Activated CD4-positive, alpha-beta T cell treated with anti-CD3 and anti-CD28 coated beads, Interleukin-2, amount 10 ng/mL, durations not matched to agents 7 days and 5 days (primary cell): ENCODE measurements at regions of chr6 and their contacts with region 1.

Region 1: DNA sequence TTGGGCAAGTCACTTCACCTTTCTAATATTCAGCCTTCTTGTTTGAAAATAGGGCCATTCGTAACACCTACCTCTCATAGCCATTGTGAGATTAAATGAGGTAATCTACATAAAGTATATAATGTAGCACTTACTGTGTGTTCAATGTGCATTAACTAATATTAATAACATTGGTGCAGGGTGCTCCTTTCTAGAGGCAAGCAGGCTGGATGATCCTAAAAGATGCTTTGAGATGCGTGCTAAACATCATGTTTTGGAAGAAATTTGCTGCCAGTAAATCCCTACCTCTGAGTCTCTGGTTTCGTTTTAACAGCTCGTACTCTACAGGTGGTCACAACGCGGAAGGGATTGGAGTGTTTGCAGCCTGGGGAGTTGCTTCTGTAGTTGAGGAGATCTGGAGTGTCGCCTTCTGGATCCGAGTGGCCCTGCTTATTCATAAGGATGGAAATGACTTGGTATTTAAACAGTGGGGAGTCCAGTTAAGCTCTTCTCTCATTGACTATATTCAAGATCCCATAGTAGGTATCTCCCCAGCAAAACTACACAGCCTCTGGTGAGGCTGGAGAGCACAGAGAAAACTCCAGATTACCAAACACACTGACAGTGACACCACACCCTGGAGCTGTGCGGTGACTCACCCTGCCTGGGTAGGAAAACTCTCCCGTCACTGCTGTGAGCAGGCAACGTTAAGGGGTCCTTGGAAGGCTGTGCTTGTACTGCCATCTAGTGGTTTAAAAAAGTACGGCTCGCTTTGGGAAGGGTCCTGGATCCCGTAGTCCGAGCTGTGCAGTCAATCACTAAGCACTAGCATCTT is 107.9 kb downstream of the MAP3K7 start:
- DNase-seq: peak; percentile 87
- H3K4me3 Mint-ChIP-seq: no peak overlapping the region
- H3K27ac Mint-ChIP-seq: peak overlapping the region; percentile 1
- H3K4me1 Mint-ChIP-seq: peaks cover 58% of the 10 kb centered on the region
- H3K27me3 Mint-ChIP-seq: no peaks in the 10 kb centered on the region

Region 2: GRCh38 chr6:89940225-89941027 is 538.6 kb before region 1 on chr6:
- CTCF ChIA-PET with region 1: interaction called, 45 read pairs
- POLR2A ChIA-PET with region 1: no interaction called
- DNase-seq: peak; percentile 83
- H3K4me3 Mint-ChIP-seq: no peak overlapping the region
- H3K27ac Mint-ChIP-seq: peak overlapping the region; percentile 72
- H3K4me1 Mint-ChIP-seq: peaks cover 45% of the 10 kb centered on the region
- H3K27me3 Mint-ChIP-seq: no peaks in the 10 kb centered on the region

Region 3: GRCh38 chr6:90285611-90286381 is 193.2 kb before region 1 on chr6:
- CTCF ChIA-PET with region 1: interaction called, 68 read pairs
- POLR2A ChIA-PET with region 1: no interaction called
- DNase-seq: peak; percentile 64
- H3K4me3 Mint-ChIP-seq: peak overlapping the region; percentile 71
- H3K27ac Mint-ChIP-seq: peak overlapping the region; percentile 92
- H3K4me1 Mint-ChIP-seq: peaks cover 89% of the 10 kb centered on the region
- H3K27me3 Mint-ChIP-seq: no peaks in the 10 kb centered on the region

Region 4: GRCh38 chr6:90290811-90291420 is 188.1 kb before region 1 on chr6:
- CTCF ChIA-PET with region 1: interaction called, 68 read pairs
- POLR2A ChIA-PET with region 1: no interaction called
- DNase-seq: no peak
- H3K4me3 Mint-ChIP-seq: peak overlapping the region; percentile 78
- H3K27ac Mint-ChIP-seq: peak overlapping the region; percentile 96
- H3K4me1 Mint-ChIP-seq: peaks cover 82% of the 10 kb centered on the region
- H3K27me3 Mint-ChIP-seq: no peaks in the 10 kb centered on the region